Activated T-helper 2 cell treated with anti-CD3 and anti-CD28 coated beads, Interferon-gamma antibody, Interleukin-2, Interleukin-4, amounts not matched to agents 10 μg/mL and 5 μg/mL and 100 μg/mL, durations not matched to agents 14 hours and 24 hours and 36 hours (primary cell): ENCODE measurements at regions of chr12 and their contacts with region 1.

Region 1: DNA sequence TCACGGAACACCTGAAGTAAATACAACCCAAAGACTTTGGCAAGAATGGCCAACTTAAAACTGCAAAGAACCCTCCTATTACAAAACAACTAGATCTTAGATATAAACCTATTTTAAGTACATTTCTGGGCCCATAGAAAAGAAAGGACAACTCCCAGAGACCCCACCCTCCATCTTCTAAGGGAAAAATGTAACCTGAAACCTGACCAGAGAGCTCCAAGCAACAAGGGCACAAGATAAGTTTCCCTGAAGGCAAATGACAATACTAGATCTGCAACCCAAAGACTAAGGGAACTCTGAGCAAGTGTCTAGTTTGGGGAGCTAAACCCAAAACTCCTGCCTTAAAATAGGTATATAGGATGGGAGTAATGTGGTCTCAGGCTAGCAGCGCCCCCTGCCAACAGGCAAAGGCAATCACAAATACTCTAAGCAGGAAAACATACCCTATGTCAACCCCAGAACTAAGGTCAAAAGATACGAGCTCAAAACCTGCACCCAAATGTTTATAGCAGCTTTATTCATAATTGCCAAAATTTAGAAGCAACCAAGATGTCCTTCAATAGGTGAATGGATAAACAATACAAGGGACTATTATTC is 218.9 kb downstream of the ITPR2 start:
- DNase-seq: no peak
- H3K4me3 Mint-ChIP-seq: no peak overlapping the region
- H3K27ac Mint-ChIP-seq: no peak overlapping the region
- H3K4me1 Mint-ChIP-seq: no peaks in the 10 kb centered on the region
- H3K27me3 Mint-ChIP-seq: no peaks in the 10 kb centered on the region

Region 2: GRCh38 chr12:26425587-26426260 is 188.4 kb before region 1 on chr12:
- intact Hi-C with region 1: loop called (anchors 10 kb)
- DNase-seq: no peak
- H3K4me3 Mint-ChIP-seq: no peak overlapping the region
- H3K27ac Mint-ChIP-seq: no peak overlapping the region
- H3K4me1 Mint-ChIP-seq: peaks cover 10% of the 10 kb centered on the region
- H3K27me3 Mint-ChIP-seq: no peaks in the 10 kb centered on the region

Region 3: DNA sequence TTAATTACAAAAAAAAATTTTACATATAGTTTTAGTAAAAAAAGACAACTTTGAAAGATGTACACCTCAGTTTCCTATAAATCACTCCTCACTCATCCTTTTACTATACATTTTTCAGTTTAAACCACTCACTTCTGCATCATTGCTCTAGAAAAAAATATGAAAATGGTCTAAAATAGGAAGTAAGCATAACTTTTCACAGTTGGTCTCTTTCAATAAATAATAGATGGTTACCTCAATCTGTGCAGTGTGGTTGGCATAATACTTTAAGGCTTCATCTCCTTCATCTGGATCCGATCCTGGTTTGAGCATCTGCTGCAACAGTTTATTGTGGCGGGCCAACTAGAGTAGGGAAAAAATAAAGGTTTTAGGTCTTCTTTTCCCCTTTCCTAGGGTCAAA is 170.8 kb before region 1 on chr12:
- intact Hi-C with region 1: no loop called
- DNase-seq: no peak
- H3K4me3 Mint-ChIP-seq: no peak overlapping the region
- H3K27ac Mint-ChIP-seq: no peak overlapping the region
- H3K4me1 Mint-ChIP-seq: no peaks in the 10 kb centered on the region
- H3K27me3 Mint-ChIP-seq: no peaks in the 10 kb centered on the region

Region 4: DNA sequence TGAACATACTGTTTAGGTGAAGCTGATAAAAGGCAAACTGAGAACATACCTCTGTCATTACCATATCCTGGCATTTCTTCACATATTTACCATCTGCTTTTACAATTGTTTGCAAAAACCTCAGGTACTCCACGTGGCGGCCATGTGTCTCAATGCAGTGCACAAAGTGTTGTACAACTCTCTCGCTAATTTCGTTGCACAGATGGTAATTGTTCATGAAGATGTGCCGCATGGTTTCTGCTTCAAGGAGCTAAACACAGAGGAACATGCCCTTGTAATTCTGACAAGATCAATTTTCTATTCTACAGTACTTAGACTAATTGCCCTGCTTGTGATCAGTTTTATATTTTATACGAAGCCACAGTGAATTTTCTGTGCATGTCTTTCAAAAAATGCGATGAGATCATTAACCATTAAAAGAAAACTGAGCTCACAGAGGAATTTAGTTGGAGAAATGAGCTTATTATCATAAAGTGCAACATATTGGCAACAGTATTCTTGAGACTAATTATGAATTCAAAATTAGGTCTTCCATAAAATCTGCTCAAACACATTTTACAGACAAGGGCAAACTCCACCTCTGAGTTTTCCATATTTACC is 14.9 kb before region 1 on chr12:
- intact Hi-C with region 1: no loop called
- DNase-seq: no peak
- H3K4me3 Mint-ChIP-seq: no peak overlapping the region
- H3K27ac Mint-ChIP-seq: no peak overlapping the region
- H3K4me1 Mint-ChIP-seq: no peaks in the 10 kb centered on the region
- H3K27me3 Mint-ChIP-seq: no peaks in the 10 kb centered on the region